ENCODE measurements at regions of chr2 and their contacts with region 1.

Region 1: DNA sequence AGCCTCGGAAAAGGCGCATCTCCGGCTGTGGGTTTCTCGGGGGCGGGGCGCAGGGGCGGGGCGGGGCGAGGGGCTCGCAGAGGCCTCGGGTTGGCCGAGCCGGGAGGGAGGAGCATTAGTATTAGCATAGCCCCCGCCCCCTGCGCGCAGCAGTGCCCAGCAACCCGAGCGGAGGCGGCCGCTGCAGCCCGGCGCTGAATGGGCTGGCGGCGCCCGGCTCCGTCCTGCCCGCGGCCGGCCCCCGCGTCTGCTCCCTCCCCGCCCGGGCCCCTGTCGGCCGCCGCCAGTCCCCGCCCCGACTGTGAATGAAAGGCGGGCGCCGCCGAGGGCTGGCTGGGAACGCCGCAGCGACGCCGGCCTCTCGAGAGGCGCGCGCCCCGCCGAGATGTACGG is at the start of gene EFR3B:
- DNase-seq: peak; percentile 98
- ATAC-seq: peak; percentile 99
- total RNA-seq, gene EFR3B: 4.1 TPM

Region 2: DNA sequence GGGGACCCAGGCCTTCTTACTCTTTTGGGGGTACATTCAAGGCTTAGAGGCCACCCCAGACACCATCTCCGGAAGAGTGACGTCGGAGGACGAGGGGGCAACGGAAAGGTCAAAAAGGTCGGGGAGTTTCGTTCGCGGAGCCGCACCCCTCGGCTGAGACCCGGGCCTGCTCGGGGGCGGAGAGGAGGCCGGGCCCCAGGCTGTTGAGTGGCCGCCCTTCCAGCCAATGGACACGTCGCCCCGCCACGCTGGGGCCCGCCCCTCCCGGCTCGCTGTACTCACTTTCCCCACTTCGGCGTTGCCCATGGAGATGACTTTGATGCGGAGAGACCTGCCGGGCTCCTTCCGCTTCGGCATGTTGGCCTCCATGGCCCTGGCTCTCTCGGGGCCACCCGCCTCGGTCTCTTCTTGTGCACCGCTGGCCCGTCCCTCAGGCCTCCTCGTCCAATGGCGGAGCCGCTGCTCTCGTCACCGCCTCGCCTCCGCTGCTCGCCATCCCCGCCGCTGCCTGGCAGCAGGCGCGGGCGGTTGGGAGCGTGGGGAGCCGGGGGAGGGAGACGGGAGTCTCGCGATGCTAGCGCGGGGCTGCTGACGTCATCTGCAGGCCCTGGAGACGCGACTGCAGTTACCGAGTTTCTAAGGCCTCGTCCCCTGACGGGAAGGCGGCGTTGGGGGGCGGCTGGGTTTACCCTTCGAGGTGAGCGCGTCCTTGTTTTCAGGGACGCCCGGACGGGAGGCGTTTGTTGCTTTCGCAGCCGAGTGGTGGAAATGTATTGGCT is 70.2 kb before region 1 on chr2 and contains the start of gene DNAJC27:
- intact Hi-C with region 1: loop called (anchors 2 kb)
- DNase-seq: peak; percentile 99
- ATAC-seq: peak; percentile 97
- total RNA-seq, gene DNAJC27: 9.8 TPM

Region 3: DNA sequence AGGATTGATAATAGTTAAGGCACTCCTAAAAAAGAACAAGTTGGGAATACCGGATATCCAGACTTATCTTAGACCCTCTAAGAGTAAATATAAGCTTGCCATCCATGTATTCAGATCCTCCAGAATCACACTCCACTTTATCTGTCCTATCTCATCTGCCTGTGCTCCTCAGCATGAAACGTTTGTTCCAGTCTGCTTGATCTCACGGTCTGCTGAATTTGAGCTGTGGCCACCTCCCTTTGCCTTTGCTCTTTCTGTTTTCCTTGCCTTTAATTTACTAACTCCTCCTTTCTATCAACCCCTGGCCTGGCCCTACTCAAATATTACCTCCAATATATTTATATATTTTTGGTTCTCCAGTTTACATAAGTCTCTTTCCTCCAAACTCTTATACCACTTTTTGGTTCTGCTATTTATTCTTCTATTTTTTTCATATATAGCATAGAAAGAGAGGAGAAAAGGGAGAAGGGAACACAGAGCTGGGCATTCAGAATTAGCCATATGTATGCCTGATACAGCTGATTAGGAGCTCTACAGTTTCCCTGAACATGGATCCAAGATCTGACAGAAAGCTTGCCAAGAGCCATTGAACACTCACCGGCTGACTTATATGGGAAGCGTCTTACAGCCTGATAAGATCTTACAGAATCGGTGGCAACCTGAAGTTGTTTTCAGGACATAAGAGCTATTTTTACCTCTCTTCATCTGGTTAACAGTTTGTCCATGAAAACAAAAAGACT is 48.3 kb before region 1 on chr2:
- intact Hi-C with region 1: loop called (anchors 5 kb)
- DNase-seq: no peak
- ATAC-seq: no peak

Region 4: DNA sequence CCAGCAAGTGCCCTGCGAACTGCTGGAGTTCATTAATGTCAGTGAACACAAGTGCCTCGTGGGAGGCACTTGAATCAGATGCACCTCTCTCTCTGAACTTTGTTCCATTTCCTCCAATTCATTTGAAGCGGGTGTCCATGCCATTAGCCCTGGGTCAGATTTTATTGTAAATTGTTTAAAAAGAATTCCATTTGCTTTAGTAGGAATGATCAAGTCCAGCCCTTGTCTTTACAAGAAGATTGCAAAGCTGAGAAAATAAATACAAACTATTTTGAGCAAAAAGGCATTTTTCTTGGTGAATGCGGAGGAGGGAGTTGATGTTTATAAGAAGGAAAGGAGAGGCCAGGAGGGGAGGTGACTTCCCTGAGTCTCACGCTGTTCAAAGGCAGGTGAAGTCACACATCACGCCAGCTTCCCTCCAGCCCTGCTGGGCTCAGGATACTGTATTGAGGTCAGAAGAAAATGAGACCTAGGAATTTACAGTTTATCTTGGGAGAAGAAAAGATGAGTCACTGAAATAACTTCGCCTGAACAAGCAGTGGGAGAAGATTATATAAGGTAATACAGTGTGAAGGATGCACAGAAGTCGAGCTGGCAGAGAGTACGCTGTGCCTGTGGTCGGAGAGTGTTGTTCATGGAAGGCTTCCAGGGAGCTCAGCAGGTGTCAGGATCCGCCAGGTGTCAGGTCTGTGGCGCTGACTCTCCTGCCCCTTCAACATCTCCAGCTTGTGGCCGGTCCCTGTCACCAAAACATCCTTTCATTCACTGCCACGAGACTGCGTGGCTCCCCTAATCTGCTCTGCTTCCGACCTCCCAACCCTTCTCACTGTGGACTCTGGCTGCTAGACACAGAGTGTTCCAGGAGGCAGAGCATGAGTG is 36.5 kb after region 1 on chr2:
- intact Hi-C with region 1: loop called (anchors 5 kb)
- DNase-seq: no peak
- ATAC-seq: no peak

Region 5: DNA sequence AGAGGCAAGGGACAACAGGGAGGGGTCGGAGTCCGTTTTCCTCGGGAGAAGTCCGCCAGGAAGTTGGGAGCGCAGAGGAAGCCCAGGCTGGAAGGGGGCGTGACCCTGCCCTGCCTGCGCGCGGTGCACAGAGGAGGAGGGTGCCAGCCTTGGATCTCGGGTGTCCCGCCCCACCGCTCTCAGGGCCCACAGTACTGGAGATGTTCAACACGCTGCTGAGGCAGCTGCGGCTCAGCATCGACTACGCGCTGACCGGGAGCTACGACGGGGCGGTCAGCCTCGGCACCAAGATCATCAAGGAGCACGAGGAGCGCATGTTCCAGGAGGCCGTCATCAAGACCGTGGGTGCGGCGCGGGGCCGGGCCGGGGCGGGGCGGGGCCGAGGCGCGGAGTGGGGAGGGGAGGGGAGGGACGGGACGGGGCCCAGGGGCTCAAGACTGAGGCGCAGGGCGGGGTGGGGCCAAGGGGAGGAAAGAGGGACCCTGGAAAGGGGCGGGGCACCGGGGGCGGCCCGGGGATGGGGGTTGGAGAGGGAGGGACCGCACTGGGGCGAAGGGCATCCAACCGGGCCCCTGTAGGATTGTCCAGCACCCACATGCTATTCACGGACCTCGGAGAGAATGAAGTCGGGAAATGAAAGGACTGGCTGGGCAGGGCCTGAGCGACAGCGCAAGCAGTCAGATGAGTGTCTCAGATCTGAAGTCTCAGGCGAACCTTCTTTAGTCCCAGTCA is 89.8 kb after region 1 on chr2:
- intact Hi-C with region 1: loop called (anchors 1 kb)
- DNase-seq: no peak
- ATAC-seq: peak; percentile 37

Region 6: GRCh38 chr2:25201265-25201664 is 159.3 kb after region 1 on chr2:
- intact Hi-C with region 1: no loop called
- DNase-seq: no peak
- ATAC-seq: no peak

Measured in Right ventricle myocardium inferior (tissue), 1 donor.